Activated T-helper 2 cell treated with anti-CD3 and anti-CD28 coated beads, Interferon-gamma antibody, Interleukin-2, Interleukin-4, amounts not matched to agents 10 μg/mL and 5 μg/mL and 100 μg/mL, durations not matched to agents 14 hours and 24 hours and 36 hours (primary cell): ENCODE measurements at regions of chr14 and their contacts with region 1.

Region 1: DNA sequence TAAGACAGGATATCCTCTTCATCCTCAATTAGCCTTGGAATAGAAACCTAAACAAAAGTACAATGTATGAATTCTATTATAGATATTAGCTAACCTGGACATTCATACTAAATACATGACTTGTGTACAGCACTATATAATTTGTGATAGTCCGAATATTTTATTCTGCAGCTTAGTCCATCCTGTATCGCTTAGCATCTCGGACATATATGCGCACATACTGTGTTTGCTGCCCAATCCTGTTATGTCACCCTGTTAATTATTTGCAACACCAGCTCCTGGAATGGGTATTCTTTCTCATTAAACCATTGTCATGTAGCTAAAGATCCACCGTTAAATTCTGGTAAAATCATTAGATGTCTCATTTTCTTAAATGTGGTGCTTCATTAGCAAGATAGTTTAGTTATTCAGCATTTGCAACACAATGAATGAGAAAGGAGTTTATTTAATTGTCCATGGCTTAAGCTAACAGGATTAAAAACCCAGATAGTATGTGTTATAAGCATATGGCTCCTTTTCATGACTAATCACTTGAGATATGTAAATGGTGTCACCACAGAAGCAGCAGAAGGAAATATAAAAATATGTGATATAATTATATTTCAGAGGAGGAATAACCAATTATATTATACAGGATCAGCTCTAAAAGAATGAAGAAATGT is 156.0 kb upstream of the ARHGAP5 start:
- DNase-seq: no peak
- H3K4me3 Mint-ChIP-seq: no peak overlapping the region
- H3K27ac Mint-ChIP-seq: no peak overlapping the region
- H3K4me1 Mint-ChIP-seq: peaks cover 2% of the 10 kb centered on the region
- H3K27me3 Mint-ChIP-seq: peaks cover 1% of the 10 kb centered on the region

Region 2: GRCh38 chr14:31854508-31855075 is 66.5 kb before region 1 on chr14:
- intact Hi-C with region 1: loop called (anchors 2 kb)
- DNase-seq: no peak
- H3K4me3 Mint-ChIP-seq: no peak overlapping the region
- H3K27ac Mint-ChIP-seq: peak overlapping the region; percentile 47
- H3K4me1 Mint-ChIP-seq: peaks cover 13% of the 10 kb centered on the region
- H3K27me3 Mint-ChIP-seq: no peaks in the 10 kb centered on the region